ENCODE measurements at regions of chr7 and their contacts with region 1.

Region 1: DNA sequence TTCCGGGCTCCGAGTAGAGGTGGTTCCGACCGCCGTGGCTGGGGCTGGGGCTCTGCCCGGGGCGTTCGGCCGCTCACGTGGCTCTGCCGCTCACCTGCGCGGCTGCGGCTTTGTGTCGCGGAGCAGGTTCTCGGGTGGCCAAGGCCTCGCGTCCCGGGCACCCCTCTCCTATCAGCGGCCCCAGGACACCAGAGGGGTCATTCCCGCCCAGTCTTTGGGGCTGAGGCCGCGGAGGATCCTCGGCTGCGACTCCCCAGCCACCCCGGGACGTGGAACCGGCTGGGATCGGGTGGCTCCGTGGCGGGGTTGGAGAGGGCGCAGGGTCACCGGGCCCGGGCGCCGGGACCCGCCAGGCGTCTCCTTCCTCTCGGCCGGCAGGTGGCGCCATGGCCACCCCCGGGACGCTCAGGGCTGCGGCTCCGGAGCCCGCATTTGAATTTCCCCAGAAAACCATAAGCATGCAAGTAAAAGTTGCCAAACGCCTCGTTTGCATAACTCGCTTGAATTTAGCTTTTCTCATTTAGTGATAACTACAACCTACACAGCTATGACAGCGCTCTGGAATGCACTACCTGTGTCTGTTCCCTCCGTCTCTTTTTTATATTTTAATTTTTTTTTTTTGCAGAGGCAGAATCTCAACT is 1.2 kb downstream of the COL26A1 start:
- DNase-seq: peak; percentile 70
- H3K4me3 Mint-ChIP-seq: no peak overlapping the region
- H3K27ac Mint-ChIP-seq: no peak overlapping the region
- H3K4me1 Mint-ChIP-seq: peaks cover 11% of the 10 kb centered on the region
- H3K27me3 Mint-ChIP-seq: peaks cover 34% of the 10 kb centered on the region

Region 2: DNA sequence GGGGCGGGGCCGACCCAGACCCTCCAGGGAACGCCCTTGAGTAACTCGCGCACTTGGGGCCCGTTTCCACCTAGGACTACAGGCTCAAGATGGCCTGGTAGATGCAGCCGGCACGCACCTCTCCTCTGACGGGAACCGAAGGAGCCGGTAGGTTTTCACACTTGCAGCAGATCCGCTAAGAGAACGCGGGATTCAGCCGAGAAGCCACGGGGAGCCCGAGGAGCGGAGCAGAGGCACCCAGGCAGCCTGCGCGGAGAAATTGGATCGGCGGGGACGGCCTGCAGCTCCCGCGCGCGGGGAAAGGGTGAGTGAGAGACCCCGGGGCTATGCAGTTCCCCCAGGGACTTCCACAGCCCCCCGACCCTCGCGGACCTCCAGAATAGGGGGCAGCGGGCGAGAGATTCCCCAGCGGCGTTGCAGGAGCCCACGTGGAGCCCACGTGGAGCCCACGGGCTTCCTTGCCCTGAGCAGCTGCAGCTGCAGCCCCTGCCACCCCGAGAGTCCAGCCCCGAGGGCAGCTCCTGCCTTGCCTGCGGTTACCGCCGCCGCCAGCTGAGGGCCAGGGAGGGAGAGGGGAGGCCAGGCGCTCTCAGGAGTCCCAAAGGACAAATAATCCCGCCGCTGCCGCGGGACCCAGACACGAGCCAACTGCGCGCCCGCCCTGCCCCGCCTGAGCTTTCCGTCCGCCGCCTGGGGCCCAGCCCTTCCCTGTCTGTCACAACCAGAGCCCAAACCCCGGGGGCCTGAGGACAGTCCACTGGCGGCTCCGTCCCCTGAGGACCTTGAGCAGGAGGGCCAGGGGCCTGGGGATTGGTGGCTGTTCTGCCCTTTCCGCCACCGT is 55.4 kb before region 1 on chr7:
- CTCF ChIA-PET with region 1: no interaction called
- POLR2A ChIA-PET with region 1: no interaction called
- DNase-seq: peak; percentile 40
- H3K4me3 Mint-ChIP-seq: peak overlapping the region; percentile 77
- H3K27ac Mint-ChIP-seq: no peak overlapping the region
- H3K4me1 Mint-ChIP-seq: peaks cover 8% of the 10 kb centered on the region
- H3K27me3 Mint-ChIP-seq: peaks cover 19% of the 10 kb centered on the region

Region 3: DNA sequence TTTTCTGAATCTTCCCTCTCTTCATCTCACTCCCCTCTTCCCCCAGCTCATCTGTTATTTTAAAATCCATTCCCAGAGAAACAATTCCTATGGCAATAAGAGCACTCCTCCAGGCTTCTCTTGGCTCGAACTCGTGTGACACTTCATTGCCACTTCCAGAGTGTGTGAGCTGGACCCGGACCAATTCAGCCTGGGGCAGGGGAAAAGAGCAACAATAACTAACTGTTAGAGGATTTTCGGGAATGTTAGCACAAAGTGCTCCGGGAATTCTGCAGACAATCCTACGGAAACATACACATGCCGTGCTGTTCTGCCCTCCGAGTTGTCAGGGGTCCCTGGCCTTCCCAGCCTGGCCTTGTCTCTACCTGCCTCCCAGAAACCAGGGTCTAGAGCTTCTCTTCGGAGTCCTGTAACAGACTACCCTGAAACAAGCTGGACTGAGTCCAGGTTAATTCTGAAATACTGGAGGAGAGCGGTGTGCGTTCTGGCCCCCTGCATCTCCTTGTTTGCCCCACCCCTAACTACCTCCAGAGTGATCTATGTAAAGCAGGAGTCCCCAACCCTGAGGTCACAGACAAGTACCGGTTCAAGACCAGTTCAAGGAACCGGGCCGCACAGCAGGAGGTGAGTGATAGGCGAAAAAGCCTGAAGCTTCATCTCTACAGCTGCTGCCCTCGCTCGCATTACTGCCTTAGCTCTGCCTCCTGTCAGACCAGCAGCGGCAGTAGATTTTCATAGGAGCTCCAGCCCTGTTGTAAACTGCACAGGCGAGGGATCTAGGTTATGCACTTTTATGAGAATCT is 10.2 kb after region 1 on chr7:
- CTCF ChIA-PET with region 1: interaction called, 11 read pairs
- POLR2A ChIA-PET with region 1: no interaction called
- DNase-seq: no peak
- H3K4me3 Mint-ChIP-seq: no peak overlapping the region
- H3K27ac Mint-ChIP-seq: no peak overlapping the region
- H3K4me1 Mint-ChIP-seq: no peaks in the 10 kb centered on the region
- H3K27me3 Mint-ChIP-seq: peaks cover 22% of the 10 kb centered on the region

Region 4: GRCh38 chr7:101410743-101411507 is 47.1 kb after region 1 on chr7:
- CTCF ChIA-PET with region 1: interaction called, 43 read pairs
- POLR2A ChIA-PET with region 1: no interaction called
- DNase-seq: peak; percentile 34
- H3K4me3 Mint-ChIP-seq: no peak overlapping the region
- H3K27ac Mint-ChIP-seq: no peak overlapping the region
- H3K4me1 Mint-ChIP-seq: peaks cover 7% of the 10 kb centered on the region
- H3K27me3 Mint-ChIP-seq: peaks cover 9% of the 10 kb centered on the region

Measured in activated CD4-positive, alpha-beta memory T cell treated with anti-CD3 and anti-CD28 coated beads, Interleukin-2, amount 10 ng/mL, durations not matched to agents 7 days and 5 days (primary cell).